MCF 10A (cell line): ENCODE measurements at regions of chr16 and their contacts with region 1.

Region 1: GRCh38 chr16:67284699-67285646 is 5.6 kb downstream of the PLEKHG4 start:
- DNase-seq: peak; percentile 63
- H3K4me3 Mint-ChIP-seq: no peak overlapping the region
- H3K27ac Mint-ChIP-seq: no peak overlapping the region
- H3K4me1 Mint-ChIP-seq: peaks cover 15% of the 10 kb centered on the region
- H3K27me3 Mint-ChIP-seq: no peaks in the 10 kb centered on the region
- CTCF ChIP-seq: peak; percentile 49

Region 2: DNA sequence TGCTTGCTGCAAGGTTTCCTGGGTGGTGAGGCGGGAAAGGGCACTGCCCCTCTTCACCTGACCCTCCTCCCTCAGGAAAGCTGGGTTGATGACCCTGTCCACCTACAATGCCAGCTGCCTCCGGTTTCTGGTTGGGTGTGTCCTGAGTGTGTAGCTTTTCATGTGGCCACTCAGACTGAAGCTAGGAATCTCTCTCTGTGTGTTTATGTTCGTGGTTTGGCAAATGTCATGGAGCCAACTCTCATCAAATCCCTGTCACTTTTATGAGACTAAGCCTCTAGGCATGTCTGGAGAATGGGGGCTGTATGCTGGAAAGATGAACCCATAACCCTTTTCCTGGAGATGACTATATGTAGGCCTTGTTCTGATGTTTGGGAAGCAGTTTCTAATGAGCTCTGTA is 11.4 kb after region 1 on chr16:
- CTCF ChIA-PET with region 1: interaction called, 35 read pairs
- POLR2A ChIA-PET with region 1: no interaction called
- intact Hi-C with region 1: no loop called
- DNase-seq: no peak
- H3K4me3 Mint-ChIP-seq: no peak overlapping the region
- H3K27ac Mint-ChIP-seq: no peak overlapping the region
- H3K4me1 Mint-ChIP-seq: peaks cover 7% of the 10 kb centered on the region
- H3K27me3 Mint-ChIP-seq: peaks cover 16% of the 10 kb centered on the region
- CTCF ChIP-seq: no peak